ENCODE measurements at regions of chr2 and their contacts with region 1.

Region 1: GRCh38 chr2:130797493-130798435 is 39.0 kb upstream of the ARHGEF4 start:
- DNase-seq: peak; percentile 92
- H3K4me3 Mint-ChIP-seq: peak overlapping the region; percentile 64
- H3K27ac Mint-ChIP-seq: peak overlapping the region; percentile 47
- H3K4me1 Mint-ChIP-seq: peaks cover 12% of the 10 kb centered on the region
- H3K27me3 Mint-ChIP-seq: peaks cover 13% of the 10 kb centered on the region

Region 2: GRCh38 chr2:130727286-130728018 is 70.3 kb before region 1 on chr2:
- CTCF ChIA-PET with region 1: interaction called, 34 read pairs
- POLR2A ChIA-PET with region 1: interaction called, 12 read pairs
- DNase-seq: peak; percentile 94
- H3K4me3 Mint-ChIP-seq: peak overlapping the region; percentile 76
- H3K27ac Mint-ChIP-seq: peak overlapping the region; percentile 80
- H3K4me1 Mint-ChIP-seq: peaks cover 38% of the 10 kb centered on the region
- H3K27me3 Mint-ChIP-seq: peaks cover 24% of the 10 kb centered on the region

Region 3: GRCh38 chr2:130756053-130756873 is 41.5 kb before region 1 on chr2:
- CTCF ChIA-PET with region 1: no interaction called
- POLR2A ChIA-PET with region 1: no interaction called
- DNase-seq: no peak
- H3K4me3 Mint-ChIP-seq: no peak overlapping the region
- H3K27ac Mint-ChIP-seq: no peak overlapping the region
- H3K4me1 Mint-ChIP-seq: peaks cover 7% of the 10 kb centered on the region
- H3K27me3 Mint-ChIP-seq: peaks cover 40% of the 10 kb centered on the region

Region 4: GRCh38 chr2:130810490-130810889 is 12.7 kb after region 1 on chr2:
- CTCF ChIA-PET with region 1: interaction called, 10 read pairs
- POLR2A ChIA-PET with region 1: no interaction called
- DNase-seq: no peak
- H3K4me3 Mint-ChIP-seq: no peak overlapping the region
- H3K27ac Mint-ChIP-seq: no peak overlapping the region
- H3K4me1 Mint-ChIP-seq: peaks cover 16% of the 10 kb centered on the region
- H3K27me3 Mint-ChIP-seq: peaks cover 26% of the 10 kb centered on the region

Region 5: GRCh38 chr2:130824492-130825061 is 26.8 kb after region 1 on chr2:
- CTCF ChIA-PET with region 1: interaction called, 26 read pairs
- POLR2A ChIA-PET with region 1: interaction called, 5 read pairs
- DNase-seq: peak; percentile 78
- H3K4me3 Mint-ChIP-seq: no peak overlapping the region
- H3K27ac Mint-ChIP-seq: peak overlapping the region; percentile 82
- H3K4me1 Mint-ChIP-seq: peaks cover 25% of the 10 kb centered on the region
- H3K27me3 Mint-ChIP-seq: peaks cover 8% of the 10 kb centered on the region

Region 6: DNA sequence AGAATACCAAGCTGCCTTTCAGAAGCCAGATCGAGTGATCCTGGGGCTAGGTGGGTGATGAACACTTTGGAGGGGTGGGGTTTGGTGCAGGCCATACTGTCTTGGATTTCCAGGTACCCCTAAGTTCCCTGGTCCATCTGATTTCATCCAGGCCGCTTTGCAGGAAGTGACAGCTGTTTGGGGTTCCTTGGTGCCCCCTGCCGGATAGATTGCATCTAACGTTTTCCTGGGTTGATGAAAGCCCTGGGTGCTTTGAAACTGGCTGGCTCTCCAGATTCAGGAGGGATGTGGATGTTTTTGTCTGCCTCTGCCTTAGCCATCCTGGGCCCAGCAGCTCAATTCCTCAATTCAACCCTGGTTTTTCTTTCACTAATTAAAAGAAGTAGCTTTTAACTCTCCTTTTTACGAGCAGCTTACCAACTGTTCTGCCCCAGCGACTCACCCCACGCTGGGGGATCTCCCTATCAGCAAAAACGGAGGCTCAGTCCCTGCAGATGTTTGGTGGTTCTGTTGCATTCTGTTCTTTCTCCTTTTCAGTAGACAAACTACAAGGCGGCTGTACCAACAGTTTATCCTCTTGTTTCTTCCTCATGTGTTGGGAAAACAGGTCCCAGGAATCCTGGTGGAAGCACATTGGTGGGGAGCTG is 76.1 kb after region 1 on chr2:
- CTCF ChIA-PET with region 1: interaction called, 243 read pairs
- POLR2A ChIA-PET with region 1: interaction called, 9 read pairs
- DNase-seq: peak; percentile 77
- H3K4me3 Mint-ChIP-seq: no peak overlapping the region
- H3K27ac Mint-ChIP-seq: no peak overlapping the region
- H3K4me1 Mint-ChIP-seq: no peaks in the 10 kb centered on the region
- H3K27me3 Mint-ChIP-seq: peaks cover 17% of the 10 kb centered on the region

Region 7: GRCh38 chr2:130884503-130884902 is 86.7 kb after region 1 on chr2:
- CTCF ChIA-PET with region 1: interaction called, 13 read pairs
- POLR2A ChIA-PET with region 1: no interaction called
- DNase-seq: no peak
- H3K4me3 Mint-ChIP-seq: no peak overlapping the region
- H3K27ac Mint-ChIP-seq: no peak overlapping the region
- H3K4me1 Mint-ChIP-seq: no peaks in the 10 kb centered on the region
- H3K27me3 Mint-ChIP-seq: peaks cover 10% of the 10 kb centered on the region

Region 8: GRCh38 chr2:130920415-130921163 is 122.8 kb after region 1 on chr2:
- CTCF ChIA-PET with region 1: interaction called, 29 read pairs
- POLR2A ChIA-PET with region 1: interaction called, 3 read pairs
- DNase-seq: peak; percentile 57
- H3K4me3 Mint-ChIP-seq: no peak overlapping the region
- H3K27ac Mint-ChIP-seq: no peak overlapping the region
- H3K4me1 Mint-ChIP-seq: no peaks in the 10 kb centered on the region
- H3K27me3 Mint-ChIP-seq: peaks cover 9% of the 10 kb centered on the region

Region 9: GRCh38 chr2:130957915-130958314 is 160.2 kb after region 1 on chr2:
- CTCF ChIA-PET with region 1: no interaction called
- POLR2A ChIA-PET with region 1: no interaction called
- DNase-seq: no peak
- H3K4me3 Mint-ChIP-seq: no peak overlapping the region
- H3K27ac Mint-ChIP-seq: no peak overlapping the region
- H3K4me1 Mint-ChIP-seq: no peaks in the 10 kb centered on the region
- H3K27me3 Mint-ChIP-seq: peaks cover 35% of the 10 kb centered on the region

Region 10: GRCh38 chr2:130976591-130977237 is 178.9 kb after region 1 on chr2:
- CTCF ChIA-PET with region 1: no interaction called
- POLR2A ChIA-PET with region 1: no interaction called
- DNase-seq: no peak
- H3K4me3 Mint-ChIP-seq: no peak overlapping the region
- H3K27ac Mint-ChIP-seq: no peak overlapping the region
- H3K4me1 Mint-ChIP-seq: peaks cover 7% of the 10 kb centered on the region
- H3K27me3 Mint-ChIP-seq: peaks cover 3% of the 10 kb centered on the region